ENCODE measurements at regions of chr4 and their contacts with region 1.

Region 1: GRCh38 chr4:90546114-90546513 is 418.9 kb downstream of the CCSER1 start:
- DNase-seq: peak; percentile 80
- ATAC-seq: peak; percentile 97
- H3K4me3 ChIP-seq: no peak overlapping the region
- H3K27ac ChIP-seq: 0 out of 2 replicates have a peak overlapping the region, but pooled peaks have one; percentile 24
- H3K4me1 ChIP-seq: peaks cover 16% of the 10 kb centered on the region
- H3K27me3 ChIP-seq: no peaks in the 10 kb centered on the region
- CTCF ChIP-seq: no peak

Region 2: DNA sequence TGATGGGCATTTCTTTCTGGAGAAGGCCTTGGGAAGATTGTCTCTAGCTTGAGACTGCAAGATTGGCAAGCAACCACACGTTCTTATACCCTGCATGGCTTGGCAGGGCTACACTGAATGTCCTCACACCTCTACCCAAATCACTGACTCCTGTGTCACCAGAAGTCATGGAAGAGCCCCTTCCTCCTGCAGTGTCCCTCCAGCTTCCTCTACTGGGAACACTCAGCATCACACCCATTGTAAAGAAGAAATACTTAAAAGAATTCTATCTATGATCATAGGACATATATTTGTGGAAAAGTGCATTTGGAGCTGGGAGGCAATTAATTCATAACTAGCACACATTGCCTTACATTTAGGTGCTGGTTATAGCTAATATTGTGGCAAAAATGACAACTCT is 305.8 kb before region 1 on chr4:
- CTCF ChIA-PET with region 1: no interaction called
- POLR2A ChIA-PET with region 1: no interaction called
- intact Hi-C with region 1: no loop called
- DNase-seq: no peak
- ATAC-seq: no peak
- H3K4me3 ChIP-seq: no peak overlapping the region
- H3K27ac ChIP-seq: no peak overlapping the region
- H3K4me1 ChIP-seq: no peaks in the 10 kb centered on the region
- H3K27me3 ChIP-seq: no peaks in the 10 kb centered on the region
- CTCF ChIP-seq: 0 out of 2 replicates have a peak, but pooled peaks have one; percentile 14

Region 3: DNA sequence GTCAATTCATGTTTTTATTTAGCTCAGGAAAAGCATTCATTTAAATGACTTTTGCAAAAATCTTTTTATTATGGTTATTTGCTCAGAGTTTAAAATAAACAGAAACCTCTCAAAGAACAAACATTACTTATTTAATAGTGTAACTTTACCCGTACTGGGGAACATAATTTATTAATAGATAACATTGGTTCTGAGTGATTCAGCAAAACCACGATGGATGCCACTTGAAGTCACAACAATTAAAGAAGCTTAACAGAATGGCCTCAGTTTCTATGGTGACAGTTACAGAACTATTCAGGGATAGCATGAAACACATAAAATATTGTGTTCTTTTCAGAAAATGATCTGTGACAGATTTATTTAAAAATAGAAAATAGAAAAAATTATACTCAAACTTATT is 50.2 kb before region 1 on chr4:
- CTCF ChIA-PET with region 1: no interaction called
- POLR2A ChIA-PET with region 1: interaction called, 5 read pairs
- intact Hi-C with region 1: loop called (anchors 2 kb)
- DNase-seq: peak; percentile 73
- ATAC-seq: peak; percentile 93
- H3K4me3 ChIP-seq: no peak overlapping the region
- H3K27ac ChIP-seq: peak overlapping the region; percentile 85
- H3K4me1 ChIP-seq: peaks cover 18% of the 10 kb centered on the region
- H3K27me3 ChIP-seq: no peaks in the 10 kb centered on the region
- CTCF ChIP-seq: no peak

Region 4: GRCh38 chr4:90757534-90758060 is 211.5 kb after region 1 on chr4:
- CTCF ChIA-PET with region 1: no interaction called
- POLR2A ChIA-PET with region 1: no interaction called
- intact Hi-C with region 1: no loop called
- DNase-seq: no peak
- ATAC-seq: no peak
- H3K4me3 ChIP-seq: no peak overlapping the region
- H3K27ac ChIP-seq: no peak overlapping the region
- H3K4me1 ChIP-seq: peaks cover 6% of the 10 kb centered on the region
- H3K27me3 ChIP-seq: no peaks in the 10 kb centered on the region
- CTCF ChIP-seq: no peak